ENCODE measurements at regions of chr4 and their contacts with region 1.

Region 1: GRCh38 chr4:122716825-122717448 is 15.6 kb upstream of the BBS12 start:
- DNase-seq: no peak
- H3K4me3 ChIP-seq: no peak overlapping the region
- H3K27ac ChIP-seq: no peak overlapping the region
- H3K27me3 ChIP-seq: no peaks in the 10 kb centered on the region
- CTCF ChIP-seq: peak; percentile 97

Region 2: GRCh38 chr4:122602277-122603142 is 114.4 kb before region 1 on chr4:
- CTCF ChIA-PET with region 1: interaction called, 65 read pairs
- POLR2A ChIA-PET with region 1: no interaction called
- DNase-seq: no peak
- H3K4me3 ChIP-seq: no peak overlapping the region
- H3K27ac ChIP-seq: no peak overlapping the region
- H3K27me3 ChIP-seq: no peaks in the 10 kb centered on the region
- CTCF ChIP-seq: peak; percentile 50

Region 3: GRCh38 chr4:122692641-122693520 is 24.1 kb before region 1 on chr4:
- CTCF ChIA-PET with region 1: interaction called, 13 read pairs
- POLR2A ChIA-PET with region 1: no interaction called
- DNase-seq: no peak
- H3K4me3 ChIP-seq: no peak overlapping the region
- H3K27ac ChIP-seq: no peak overlapping the region
- H3K27me3 ChIP-seq: no peaks in the 10 kb centered on the region
- CTCF ChIP-seq: no peak

Region 4: GRCh38 chr4:122732329-122733026 is 15.5 kb after region 1 on chr4 and contains the start of gene BBS12:
- CTCF ChIA-PET with region 1: interaction called, 45 read pairs
- POLR2A ChIA-PET with region 1: no interaction called
- DNase-seq: peak; percentile 99
- H3K4me3 ChIP-seq: peak within 1 kb of the TSS; percentile 79
- H3K27ac ChIP-seq: peak within 1 kb of the TSS; percentile 62
- H3K27me3 ChIP-seq: no peaks in the 10 kb centered on the region
- CTCF ChIP-seq: peak; percentile 52
- polyA plus RNA-seq, gene BBS12: 2.2 and 3.2 TPM in 2 replicates

Region 5: DNA sequence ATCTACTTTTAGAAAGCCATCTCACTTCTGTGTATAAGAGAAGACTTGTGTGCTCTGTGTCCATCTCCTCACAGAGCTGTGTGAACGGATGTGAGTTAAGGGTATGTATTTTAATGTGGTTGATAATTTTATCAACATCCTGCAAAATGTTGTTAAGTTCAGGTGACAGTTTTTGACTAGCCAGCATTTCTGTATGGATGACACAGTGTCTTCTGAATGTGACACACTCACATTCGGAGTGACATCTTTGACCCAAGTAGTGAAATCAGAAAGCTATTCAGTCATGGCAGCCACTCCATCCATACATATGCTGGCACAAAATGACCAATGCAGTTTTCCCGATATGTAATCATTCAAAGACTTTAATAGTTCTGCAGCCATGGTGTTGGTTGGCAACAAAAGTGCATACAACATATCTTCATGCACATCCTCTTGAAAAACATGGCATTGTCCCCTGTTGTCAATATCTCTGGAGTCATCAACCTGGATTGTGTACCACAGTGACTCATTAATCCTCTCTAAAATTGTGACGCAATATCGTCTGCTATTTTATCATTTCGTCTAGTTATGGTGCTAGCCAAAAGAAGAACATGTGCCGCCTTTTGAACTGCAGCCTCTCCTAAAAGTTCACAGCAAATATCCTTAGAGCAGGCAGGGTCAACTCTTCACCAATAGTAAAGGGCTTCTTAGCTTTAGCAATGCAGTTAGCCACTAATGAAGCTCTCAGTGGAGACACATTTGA is 102.9 kb after region 1 on chr4:
- CTCF ChIA-PET with region 1: no interaction called
- POLR2A ChIA-PET with region 1: no interaction called
- DNase-seq: no peak
- H3K4me3 ChIP-seq: no peak overlapping the region
- H3K27ac ChIP-seq: no peak overlapping the region
- H3K27me3 ChIP-seq: no peaks in the 10 kb centered on the region
- CTCF ChIP-seq: no peak

Region 6: GRCh38 chr4:122930862-122931261 is 213.9 kb after region 1 on chr4:
- CTCF ChIA-PET with region 1: interaction called, 32 read pairs
- POLR2A ChIA-PET with region 1: no interaction called
- DNase-seq: no peak
- H3K4me3 ChIP-seq: no peak overlapping the region
- H3K27ac ChIP-seq: no peak overlapping the region
- H3K27me3 ChIP-seq: no peaks in the 10 kb centered on the region
- CTCF ChIP-seq: peak; percentile 50

Measured in AG04450 (cell line).